Heart right ventricle (tissue), 16 donors: ENCODE measurements at regions of chr6 and their contacts with region 1.

Region 1: GRCh38 chr6:92297138-92297537 is 1122.2 kb downstream of the EPHA7 start:
- DNase-seq: no peak
- ATAC-seq: no peak
- H3K4me3 ChIP-seq: no peak overlapping the region
- H3K27ac ChIP-seq: no peak overlapping the region
- H3K4me1 ChIP-seq: no peaks in the 10 kb centered on the region
- H3K27me3 ChIP-seq: no peaks in the 10 kb centered on the region
- CTCF ChIP-seq: no peak

Region 2: DNA sequence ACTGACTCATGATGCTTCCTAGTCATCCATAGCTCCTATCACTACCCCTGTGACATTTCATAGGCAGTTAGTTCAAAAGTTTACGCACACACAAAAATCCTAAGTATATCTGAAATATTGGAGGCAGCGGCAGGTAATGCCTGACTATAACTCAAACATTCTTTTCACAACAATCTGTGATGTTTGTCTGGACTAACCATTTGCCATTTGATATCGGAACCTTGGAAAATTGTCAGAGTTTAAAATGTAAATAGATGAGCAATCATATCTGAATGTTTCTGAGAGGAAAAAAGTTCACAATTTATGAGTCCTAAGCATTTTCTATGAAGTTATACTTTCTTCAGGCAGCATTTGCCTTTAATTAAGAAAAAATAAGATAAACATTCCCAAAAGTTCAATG is 44.1 kb after region 1 on chr6:
- intact Hi-C with region 1: loop called in 1 of 10 experiments (anchors 2 kb)
- DNase-seq: no peak
- ATAC-seq: no peak
- H3K4me3 ChIP-seq: no peak overlapping the region
- H3K27ac ChIP-seq: no peak overlapping the region
- H3K4me1 ChIP-seq: no peaks in the 10 kb centered on the region
- H3K27me3 ChIP-seq: no peaks in the 10 kb centered on the region
- CTCF ChIP-seq: peak in 1 of 9 donors; percentile 3